Thyroid gland (tissue), 4 donors: ENCODE measurements at regions of chr12 and their contacts with region 1.

Region 1: GRCh38 chr12:15001733-15002382 is 29.0 kb downstream of the PDE6H start:
- DNase-seq: peak; percentile 51 to 69
- H3K4me3 ChIP-seq: no peak overlapping the region
- H3K27ac ChIP-seq: peak overlapping the region in 1 of 3 donors; percentile 35
- H3K4me1 ChIP-seq: peaks cover 18 to 22% of the 10 kb centered on the region in 2 donors
- H3K27me3 ChIP-seq: no peaks in the 10 kb centered on the region
- CTCF ChIP-seq: no peak
- POLR2A ChIP-seq: no peak

Region 2: DNA sequence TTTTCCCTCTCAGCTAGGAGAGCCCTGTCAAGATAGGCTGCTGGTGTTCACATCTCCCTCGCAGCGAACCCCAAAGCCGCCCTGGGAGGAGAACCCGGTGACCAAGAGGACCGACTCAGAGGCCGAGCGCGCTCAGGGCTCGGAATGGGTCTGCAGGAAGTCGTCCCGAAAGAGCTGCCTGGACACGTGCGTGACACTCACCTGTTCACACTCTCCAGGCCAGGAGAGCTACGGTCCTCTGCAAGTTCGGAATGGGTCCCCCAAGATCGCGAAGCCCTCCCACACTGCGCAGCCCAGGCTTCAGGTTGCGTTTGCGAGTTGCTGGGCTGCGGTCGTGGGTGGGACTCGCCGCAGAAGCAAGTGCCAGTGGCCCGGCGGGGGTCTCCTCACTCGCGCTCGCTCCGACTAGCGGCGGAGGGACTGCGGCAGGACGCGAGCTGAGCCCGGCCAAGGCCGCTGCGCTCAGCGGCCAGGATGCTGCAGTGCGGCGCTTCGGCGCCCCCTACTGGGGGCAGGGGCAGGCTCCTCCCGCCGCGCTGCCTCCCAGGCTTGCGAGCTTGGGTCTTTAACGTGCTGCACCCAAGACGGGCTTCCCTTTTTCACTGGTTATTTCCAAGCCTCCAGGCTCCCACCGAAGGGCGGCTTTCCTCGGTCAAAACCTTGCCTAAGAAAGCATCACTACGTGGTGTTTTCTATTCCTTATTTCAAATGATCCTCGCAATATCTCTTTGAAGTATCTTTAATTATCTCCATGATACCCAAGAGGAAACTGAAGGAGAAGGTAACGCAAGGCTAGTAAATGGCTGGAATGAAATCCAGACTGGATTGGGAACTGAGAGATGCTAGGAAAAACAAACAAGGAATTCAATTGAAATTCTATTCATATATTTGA is 219.4 kb after region 1 on chr12 and contains the start of gene RERG:
- intact Hi-C with region 1: loop called (anchors 10 kb)
- DNase-seq: peak; percentile 73 to 78
- H3K4me3 ChIP-seq: peak within 1 kb of the TSS in 2 of 3 donors; percentile 12 to 24
- H3K27ac ChIP-seq: peak within 1 kb of the TSS; percentile 35 to 57 (median 53)
- H3K4me1 ChIP-seq: peaks cover 0 to 9% of the 10 kb centered on the region in 2 donors
- H3K27me3 ChIP-seq: no peaks in the 10 kb centered on the region
- CTCF ChIP-seq: peak; percentile 71 to 99 (median 94)
- POLR2A ChIP-seq: no peak
- total RNA-seq, gene RERG: 2.7 to 13.2 (median 4.9) TPM